Activated naive CD4-positive, alpha-beta T cell treated with anti-CD3 and anti-CD28 coated beads for 36 hours (primary cell): ENCODE measurements at regions of chr18 and their contacts with region 1.

Region 1: GRCh38 chr18:63320046-63320689 is 599 bp upstream of the BCL2 start:
- DNase-seq: peak; percentile 88
- H3K4me3 Mint-ChIP-seq: peak overlapping the region; percentile 81
- H3K27ac Mint-ChIP-seq: peak overlapping the region; percentile 90
- H3K4me1 Mint-ChIP-seq: peaks cover 24% of the 10 kb centered on the region
- H3K27me3 Mint-ChIP-seq: no peaks in the 10 kb centered on the region

Region 2: DNA sequence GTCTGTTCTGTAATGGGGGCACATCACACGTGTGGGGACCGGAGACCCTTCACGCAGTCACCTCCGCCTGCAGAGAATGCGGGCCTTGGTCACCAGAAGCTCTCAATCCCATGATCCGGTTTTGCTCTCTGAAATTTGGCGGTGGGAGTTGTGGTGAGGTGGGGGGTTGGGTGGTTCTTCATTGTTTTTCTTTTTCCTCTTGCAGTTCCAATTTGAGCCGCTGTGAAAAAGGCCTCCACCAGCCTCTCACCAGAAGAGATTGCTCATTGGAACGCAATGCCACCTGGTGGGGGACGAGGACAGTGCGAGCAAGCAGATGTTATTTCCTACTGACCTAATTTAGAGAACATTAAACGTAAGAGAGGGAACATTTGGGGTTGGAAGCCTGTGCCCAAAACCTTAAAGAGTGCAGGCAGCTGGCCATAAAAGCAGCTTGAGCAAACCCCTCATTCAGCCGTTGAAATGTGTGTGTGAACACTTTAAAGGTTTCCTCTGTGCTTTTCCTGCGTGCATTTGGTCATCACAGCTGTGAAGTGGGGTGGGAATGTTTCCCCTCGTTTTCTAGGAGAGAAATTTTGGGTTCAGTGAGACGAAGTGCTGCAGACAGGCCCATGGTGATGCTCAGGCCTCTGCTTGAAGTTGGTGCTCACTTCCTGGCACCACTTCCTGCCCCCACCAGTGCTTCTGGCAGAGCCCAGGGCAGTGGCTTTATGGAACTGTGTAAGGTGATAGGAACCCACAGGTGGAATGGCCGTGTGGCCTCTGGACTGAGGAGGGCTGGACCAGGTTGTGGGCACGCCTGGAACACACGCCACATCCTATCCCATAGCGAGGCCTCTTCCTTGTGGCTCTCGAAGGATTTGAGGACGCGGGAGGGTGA is 735.7 kb before region 1 on chr18:
- CTCF ChIA-PET with region 1: no interaction called
- intact Hi-C with region 1: loop called (anchors 5 kb)
- DNase-seq: peak; percentile 93
- H3K4me3 Mint-ChIP-seq: peak overlapping the region; percentile 2
- H3K27ac Mint-ChIP-seq: peak overlapping the region; percentile 92
- H3K4me1 Mint-ChIP-seq: peaks cover 42% of the 10 kb centered on the region
- H3K27me3 Mint-ChIP-seq: no peaks in the 10 kb centered on the region

Region 3: DNA sequence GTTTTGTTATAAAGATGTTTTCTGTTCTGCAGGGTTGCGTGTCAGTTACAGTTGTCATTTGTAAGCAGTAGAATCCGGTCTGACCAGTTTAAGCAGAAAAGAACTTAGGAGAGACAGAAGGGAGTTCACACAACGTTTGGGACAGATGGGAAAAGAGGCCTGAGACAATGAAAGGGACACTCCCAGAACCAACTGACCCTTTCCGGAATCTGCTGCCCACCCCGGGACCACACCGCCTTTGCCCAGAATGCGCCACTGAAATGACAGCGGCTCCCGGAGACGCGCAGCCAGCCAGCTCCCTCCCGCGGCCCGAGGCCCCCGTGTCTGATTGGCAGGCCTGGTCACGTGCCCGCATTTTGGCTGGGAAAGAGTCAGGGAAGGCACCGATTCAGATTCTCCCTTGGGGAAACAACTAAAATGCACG is 245.2 kb before region 1 on chr18:
- CTCF ChIA-PET with region 1: interaction called, 3 read pairs
- intact Hi-C with region 1: loop called (anchors 1 kb)
- DNase-seq: peak; percentile 83
- H3K4me3 Mint-ChIP-seq: peak overlapping the region; percentile 79
- H3K27ac Mint-ChIP-seq: no peak overlapping the region
- H3K4me1 Mint-ChIP-seq: peaks cover 9% of the 10 kb centered on the region
- H3K27me3 Mint-ChIP-seq: peaks cover 2% of the 10 kb centered on the region

Region 4: DNA sequence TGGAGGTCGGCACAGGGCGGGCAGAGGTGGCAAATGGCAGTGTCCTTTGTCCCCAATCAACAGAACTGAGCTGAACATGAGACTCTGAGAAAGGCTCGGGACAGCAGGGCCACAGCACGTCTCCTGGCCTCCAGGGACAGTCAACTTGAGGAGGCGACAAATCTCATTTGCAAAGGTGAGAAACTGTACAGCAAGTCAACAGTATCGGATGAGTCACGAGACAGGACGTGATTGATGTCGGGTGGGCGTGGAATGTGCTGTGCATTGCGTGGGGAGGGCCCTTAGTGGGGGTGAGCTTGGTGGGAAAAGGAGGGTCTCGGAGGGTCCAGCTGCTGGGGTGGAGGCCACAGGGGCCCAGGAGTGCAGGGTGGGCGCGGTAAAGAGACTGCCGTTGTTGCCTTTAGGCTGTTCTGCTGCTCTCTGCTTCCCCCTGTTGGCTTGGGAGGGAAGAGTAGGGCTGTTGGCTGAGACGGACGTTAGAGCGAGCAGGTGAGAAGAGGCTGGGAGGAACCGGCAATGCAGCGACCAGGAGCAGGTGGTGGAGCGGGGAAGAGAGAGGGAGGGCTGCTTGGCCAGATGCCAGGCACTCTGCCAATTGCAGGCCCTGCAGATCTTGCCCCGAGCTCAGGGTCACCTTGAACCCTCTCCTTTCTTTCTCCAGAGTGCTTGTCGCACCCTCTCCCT is 164.9 kb before region 1 on chr18:
- CTCF ChIA-PET with region 1: interaction called, 84 read pairs
- intact Hi-C with region 1: loop called (anchors 1 kb)
- DNase-seq: peak; percentile 93
- H3K4me3 Mint-ChIP-seq: peak overlapping the region; percentile 79
- H3K27ac Mint-ChIP-seq: peak overlapping the region; percentile 99
- H3K4me1 Mint-ChIP-seq: peaks cover 97% of the 10 kb centered on the region
- H3K27me3 Mint-ChIP-seq: no peaks in the 10 kb centered on the region

Region 5: DNA sequence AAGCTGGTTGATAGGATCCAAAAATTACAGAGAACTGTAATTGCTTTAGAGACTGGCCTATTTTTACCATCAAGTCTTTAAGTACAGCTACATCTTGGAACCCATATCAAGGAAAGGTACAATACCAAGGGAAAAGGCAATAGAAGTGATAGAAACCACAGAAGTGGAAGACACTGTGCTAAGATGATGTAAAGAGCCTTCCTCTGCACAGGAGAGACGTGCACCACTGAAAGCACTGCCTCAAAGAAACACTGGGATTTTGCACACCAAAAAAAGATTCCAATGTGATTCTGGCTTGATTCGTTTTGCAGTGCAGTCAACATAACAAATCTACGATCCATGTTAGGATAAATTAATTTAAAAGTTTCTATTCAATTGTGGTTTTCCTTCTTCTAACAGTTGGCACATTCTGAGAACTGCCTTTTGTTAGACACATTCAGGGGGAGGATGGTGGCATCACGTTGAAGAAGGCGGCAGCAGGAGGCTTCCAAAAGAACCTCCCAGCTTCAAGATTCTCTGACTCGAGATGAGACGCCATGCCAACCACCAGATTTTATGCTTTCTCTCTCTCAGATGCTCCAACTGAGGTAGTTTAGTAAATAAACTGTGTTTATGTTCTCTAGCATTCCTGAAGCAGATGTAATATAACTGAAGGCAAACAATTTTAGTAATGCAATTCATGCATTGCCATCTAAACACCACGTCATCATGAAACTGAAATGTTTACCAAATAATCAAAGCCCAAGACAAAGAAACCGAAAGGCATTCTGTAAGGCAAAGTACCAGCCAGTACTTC is 103.5 kb before region 1 on chr18:
- CTCF ChIA-PET with region 1: interaction called, 10 read pairs
- intact Hi-C with region 1: loop called (anchors 1 kb)
- DNase-seq: peak; percentile 48
- H3K4me3 Mint-ChIP-seq: peak overlapping the region; percentile 64
- H3K27ac Mint-ChIP-seq: peak overlapping the region; percentile 94
- H3K4me1 Mint-ChIP-seq: peaks cover 89% of the 10 kb centered on the region
- H3K27me3 Mint-ChIP-seq: no peaks in the 10 kb centered on the region

Region 6: GRCh38 chr18:63307551-63308200 is 12.5 kb before region 1 on chr18:
- CTCF ChIA-PET with region 1: interaction called, 31 read pairs
- intact Hi-C with region 1: loop called (anchors 1 kb)
- DNase-seq: no peak
- H3K4me3 Mint-ChIP-seq: no peak overlapping the region
- H3K27ac Mint-ChIP-seq: peak overlapping the region; percentile 2
- H3K4me1 Mint-ChIP-seq: peaks cover 81% of the 10 kb centered on the region
- H3K27me3 Mint-ChIP-seq: no peaks in the 10 kb centered on the region

Region 7: GRCh38 chr18:63439334-63439733 is 119.2 kb after region 1 on chr18:
- CTCF ChIA-PET with region 1: interaction called, 25 read pairs
- intact Hi-C with region 1: loop called (anchors 1 kb)
- DNase-seq: peak; percentile 60
- H3K4me3 Mint-ChIP-seq: no peak overlapping the region
- H3K27ac Mint-ChIP-seq: no peak overlapping the region
- H3K4me1 Mint-ChIP-seq: peaks cover 2% of the 10 kb centered on the region
- H3K27me3 Mint-ChIP-seq: no peaks in the 10 kb centered on the region